ENCODE measurements at regions of chr1 and their contacts with region 1.

Region 1: DNA sequence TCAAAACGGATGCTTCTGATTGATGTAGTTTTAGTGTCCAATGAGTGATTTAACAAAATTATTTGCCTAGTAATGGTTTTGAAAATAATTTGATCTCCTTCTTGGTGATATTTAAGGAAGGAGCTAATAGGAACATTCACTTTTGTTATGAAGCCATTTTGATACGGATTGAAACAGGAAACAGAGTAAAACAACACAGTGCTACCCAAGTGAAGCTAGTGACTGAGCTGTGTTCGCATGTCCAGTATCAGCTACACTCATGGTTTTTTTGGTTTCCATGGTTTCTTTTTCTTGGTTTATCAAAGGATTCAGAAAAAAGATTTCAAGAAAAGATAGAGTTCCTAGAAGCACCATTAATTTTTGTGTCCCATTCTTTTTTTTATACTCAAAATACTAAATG is 40.1 kb upstream of the PLEKHO1 start:
- DNase-seq: peak in 3 of 10 donors; percentile 15 to 39 (median 26)
- ATAC-seq: peak; percentile 65 to 70
- H3K4me3 Mint-ChIP-seq: peak overlapping the region; percentile 63 to 82 (median 79)
- H3K27ac Mint-ChIP-seq: peak overlapping the region; percentile 75 to 94 (median 88)
- H3K4me1 Mint-ChIP-seq: peaks cover 51 to 74% (median 66%) of the 10 kb centered on the region in 4 donors
- H3K27me3 Mint-ChIP-seq: no peaks in the 10 kb centered on the region

Region 2: GRCh38 chr1:150156868-150157603 is 47.5 kb after region 1 on chr1:
- POLR2A ChIA-PET with region 1: interaction called, 54 read pairs
- DNase-seq: no peak
- ATAC-seq: no peak
- H3K4me3 Mint-ChIP-seq: peak overlapping the region in 1 of 10 donors; percentile 52
- H3K27ac Mint-ChIP-seq: peak overlapping the region in 9 of 10 donors; percentile 29 to 99 (median 70)
- H3K4me1 Mint-ChIP-seq: peaks cover 51 to 90% (median 72%) of the 10 kb centered on the region in 4 donors
- H3K27me3 Mint-ChIP-seq: no peaks in the 10 kb centered on the region